ENCODE measurements at regions of chr3 and their contacts with region 1.

Region 1: GRCh38 chr3:57755668-57756527 is at the start of gene SLMAP:
- DNase-seq: peak; percentile 97
- H3K4me3 ChIP-seq: peak within 1 kb of the TSS; percentile 77 to 95 (median 95)
- H3K27ac ChIP-seq: peak within 1 kb of the TSS; percentile 94 to 95
- H3K4me1 ChIP-seq: peaks cover 0 to 5% of the 10 kb centered on the region in 2 donors
- H3K27me3 ChIP-seq: no peaks in the 10 kb centered on the region
- CTCF ChIP-seq: no peak
- POLR2A ChIP-seq: no peak
- total RNA-seq, gene SLMAP: 41.3 to 105 (median 83.6) TPM

Region 2: DNA sequence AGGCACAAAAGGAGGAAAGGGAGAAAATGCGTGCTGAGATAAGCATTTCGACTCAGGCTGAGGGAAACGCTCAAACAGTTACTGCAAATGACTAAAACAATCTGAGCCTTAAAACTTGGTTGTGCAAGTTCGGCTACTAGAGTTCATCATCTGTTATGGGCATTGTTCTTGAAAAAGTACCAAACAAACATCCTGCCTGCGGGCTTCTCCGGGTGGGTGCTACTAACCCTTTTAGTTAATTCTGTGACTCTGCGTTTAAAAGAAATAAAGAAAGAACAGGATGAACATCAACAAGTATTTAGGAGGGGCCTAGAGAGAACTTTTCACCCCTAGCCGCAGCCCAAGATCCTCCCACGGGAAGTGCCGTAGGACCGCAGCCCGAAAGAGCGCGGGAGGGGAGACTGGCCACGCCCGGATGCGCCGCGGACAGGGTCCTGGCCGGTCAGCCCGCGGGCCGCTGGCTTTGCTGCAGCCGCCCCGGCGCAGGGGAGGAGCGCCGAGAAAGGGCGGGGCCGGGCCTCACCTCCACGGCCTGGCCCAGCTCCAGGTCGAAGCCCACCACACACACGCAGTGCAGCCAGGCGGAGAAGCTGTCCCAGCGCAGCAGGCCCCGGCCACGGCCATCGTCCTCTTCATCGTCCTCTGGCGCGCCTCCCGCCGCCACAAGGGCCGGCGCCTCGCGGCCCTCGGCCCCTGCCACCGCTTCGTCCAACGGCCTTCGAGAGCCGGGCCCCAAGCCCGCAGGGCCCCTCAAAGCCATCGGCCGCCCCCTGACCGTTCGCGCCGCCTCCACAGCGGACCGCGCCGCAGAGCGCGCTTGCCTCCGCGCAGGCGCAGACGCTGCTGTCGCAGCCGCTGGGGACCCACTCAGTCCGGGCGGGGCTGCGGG is 63.4 kb before region 1 on chr3 and contains the start of gene DENND6A:
- intact Hi-C with region 1: loop called (anchors 5 kb)
- DNase-seq: peak; percentile 70 to 95
- H3K4me3 ChIP-seq: peak within 1 kb of the TSS; percentile 90 to 99 (median 95)
- H3K27ac ChIP-seq: peak within 1 kb of the TSS; percentile 98 to 99
- H3K4me1 ChIP-seq: no peaks in the 10 kb centered on the region
- H3K27me3 ChIP-seq: no peaks in the 10 kb centered on the region
- CTCF ChIP-seq: peak in 1 of 3 donors; percentile 26
- POLR2A ChIP-seq: peak; percentile 96
- total RNA-seq, gene DENND6A: 33.1 to 56.2 (median 38.0) TPM